PC-9 (cell line): ENCODE measurements at regions of chr20 and their contacts with region 1.

Region 1: DNA sequence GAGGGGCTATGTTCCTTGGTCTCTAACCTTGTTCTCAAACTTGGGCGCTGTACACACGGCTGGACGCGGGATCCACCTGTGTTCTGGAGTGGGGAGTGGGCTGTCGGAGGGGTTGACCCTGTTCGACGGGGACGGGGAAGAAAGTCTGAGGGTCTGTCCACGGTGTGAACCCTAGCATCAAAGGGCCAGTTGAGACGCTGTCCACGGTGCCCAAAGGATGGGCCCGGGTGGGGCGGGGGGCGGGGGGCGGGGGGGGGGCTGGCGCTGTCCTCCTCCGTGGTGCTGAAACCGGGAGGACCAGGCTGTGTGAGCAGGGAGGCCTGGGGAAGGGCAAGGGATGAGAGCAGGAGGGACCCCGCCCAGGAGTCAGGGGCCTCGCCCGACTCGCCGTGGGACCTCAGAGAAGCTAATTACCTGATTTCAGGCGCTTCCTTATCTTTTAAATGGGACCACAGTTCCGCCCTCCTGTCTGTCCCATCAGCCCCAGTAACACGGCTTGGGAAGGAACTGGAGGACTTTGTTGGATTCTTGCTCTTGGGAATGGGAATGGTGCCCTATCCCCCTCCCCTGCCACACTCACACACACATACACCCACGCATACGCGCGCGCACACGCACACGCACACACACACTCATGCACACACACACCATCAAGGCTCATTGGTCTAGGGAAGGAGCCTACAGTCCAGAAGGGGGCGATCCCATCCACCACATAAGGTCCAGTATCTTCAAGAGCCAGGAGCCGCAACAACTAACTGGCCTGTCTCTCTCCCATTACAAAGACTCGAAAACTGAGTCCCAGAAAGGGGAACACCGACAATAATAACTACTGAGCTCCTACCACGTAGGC is 1.0 kb upstream of the VSTM2L start:
- DNase-seq: peak in 1 of 2 experiments; percentile 33
- H3K4me3 ChIP-seq: no peak overlapping the region
- H3K27ac ChIP-seq: no peak overlapping the region
- H3K4me1 ChIP-seq: no peaks in the 10 kb centered on the region
- H3K27me3 ChIP-seq: peaks cover 29% of the 10 kb centered on the region
- CTCF ChIP-seq: peak; percentile 54

Region 2: GRCh38 chr20:37651932-37652331 is 249.9 kb before region 1 on chr20:
- CTCF ChIA-PET with region 1: no interaction called
- POLR2A ChIA-PET with region 1: no interaction called
- intact Hi-C with region 1: loop called (anchors 10 kb)
- DNase-seq: peak in 1 of 2 experiments; percentile 68
- H3K4me3 ChIP-seq: no peak overlapping the region
- H3K27ac ChIP-seq: no peak overlapping the region
- H3K4me1 ChIP-seq: no peaks in the 10 kb centered on the region
- H3K27me3 ChIP-seq: peaks cover 6% of the 10 kb centered on the region
- CTCF ChIP-seq: peak; percentile 67

Region 3: DNA sequence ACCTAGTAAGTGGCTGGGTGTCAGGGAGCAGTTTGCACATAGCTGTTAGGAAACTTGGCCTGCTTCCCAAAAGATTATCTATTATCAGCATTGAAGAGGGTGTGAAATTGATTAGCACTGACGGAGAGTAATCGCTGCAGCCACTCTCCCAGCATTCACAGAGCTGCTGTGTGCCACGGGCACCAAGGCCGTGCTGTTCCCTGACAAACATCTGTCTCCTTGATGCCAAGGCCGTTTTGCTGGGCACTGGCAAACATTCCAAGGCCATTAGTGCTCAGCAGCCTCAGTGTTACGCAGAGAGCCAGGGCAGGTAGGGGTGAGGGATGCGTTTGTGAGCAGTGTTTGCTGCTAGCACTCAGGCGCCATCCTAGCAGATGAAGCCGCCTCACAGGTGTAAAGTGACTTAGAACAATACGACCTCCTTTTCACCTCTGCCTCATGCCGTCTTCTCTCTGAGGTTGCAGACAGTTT is 56.6 kb before region 1 on chr20:
- CTCF ChIA-PET with region 1: no interaction called
- POLR2A ChIA-PET with region 1: no interaction called
- intact Hi-C with region 1: no loop called
- DNase-seq: no peak
- H3K4me3 ChIP-seq: no peak overlapping the region
- H3K27ac ChIP-seq: no peak overlapping the region
- H3K4me1 ChIP-seq: no peaks in the 10 kb centered on the region
- H3K27me3 ChIP-seq: no peaks in the 10 kb centered on the region
- CTCF ChIP-seq: no peak

Region 4: DNA sequence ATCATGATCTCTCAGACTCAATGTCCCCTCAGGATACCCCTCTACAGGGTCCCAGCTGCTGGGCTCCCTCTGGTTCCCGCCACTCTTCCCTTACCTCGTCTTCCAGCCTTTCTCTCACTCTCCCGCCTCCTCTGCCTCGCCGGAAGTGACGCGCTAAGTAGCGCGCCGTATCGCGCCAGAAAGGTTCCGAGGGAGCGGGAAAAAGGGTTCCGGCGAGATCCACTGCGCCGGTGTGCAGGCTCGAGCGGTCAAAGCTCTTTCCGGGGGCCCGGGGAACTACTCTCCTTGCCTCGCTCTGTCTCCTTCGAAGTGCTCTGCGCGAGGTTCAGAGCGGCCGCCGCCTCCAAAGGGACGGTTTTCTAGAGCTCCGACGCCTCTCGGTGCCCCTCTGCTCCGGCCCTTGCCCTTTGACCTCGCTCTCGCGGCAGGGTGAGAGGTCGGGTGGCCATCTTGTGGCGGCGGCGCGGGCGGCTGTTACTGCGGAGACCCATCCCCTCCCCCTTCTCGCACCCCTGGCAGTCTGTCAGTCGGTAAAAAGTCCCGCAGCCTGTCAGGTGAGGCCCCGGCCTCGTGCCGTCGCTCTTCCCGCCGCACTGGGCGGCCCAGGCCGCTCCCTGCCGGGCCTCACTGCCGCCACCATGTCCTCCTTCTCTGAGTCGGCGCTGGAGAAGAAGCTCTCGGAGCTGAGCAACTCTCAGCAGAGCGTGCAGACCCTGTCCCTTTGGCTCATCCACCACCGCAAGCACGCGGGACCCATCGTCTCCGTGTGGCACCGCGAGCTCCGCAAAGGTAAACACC is 131.6 kb after region 1 on chr20 and contains the starts of genes RPRD1B and TTI1:
- CTCF ChIA-PET with region 1: no interaction called
- POLR2A ChIA-PET with region 1: no interaction called
- intact Hi-C with region 1: loop called (anchors 10 kb)
- DNase-seq: peak; percentile 79 to 87
- H3K4me3 ChIP-seq: peak within 1 kb of the TSS; percentile 84
- H3K27ac ChIP-seq: peak within 1 kb of the TSS; percentile 60
- H3K4me1 ChIP-seq: peaks cover 47% of the 10 kb centered on the region
- H3K27me3 ChIP-seq: no peaks in the 10 kb centered on the region
- CTCF ChIP-seq: no peak
- total RNA-seq, gene RPRD1B: 55.1 and 60.1 TPM in 2 replicates
- total RNA-seq, gene TTI1: 29.1 and 34.2 TPM in 2 replicates